CD4-positive, alpha-beta memory T cell (primary cell): ENCODE measurements at regions of chr2 and their contacts with region 1.

Region 1: GRCh38 chr2:9813312-9814133 is 29.8 kb upstream of the TAF1B start:
- DNase-seq: peak; percentile 43 to 64 (median 58)
- H3K4me3 ChIP-seq: no peak overlapping the region
- H3K4me3 Mint-ChIP-seq: no peak overlapping the region
- H3K27ac ChIP-seq: no peak overlapping the region
- H3K27ac Mint-ChIP-seq: peak overlapping the region in 1 of 7 donors; percentile 77
- H3K4me1 ChIP-seq: peaks cover 6% of the 10 kb centered on the region
- H3K4me1 Mint-ChIP-seq: peaks cover 9 to 16% (median 12%) of the 10 kb centered on the region in 4 donors
- H3K27me3 ChIP-seq: no peaks in the 10 kb centered on the region
- H3K27me3 Mint-ChIP-seq: peaks cover 2 to 5% of the 10 kb centered on the region in 2 donors

Region 2: GRCh38 chr2:8389373-8390108 is 1424.0 kb before region 1 on chr2:
- CTCF ChIA-PET with region 1: no interaction called
- POLR2A ChIA-PET with region 1: no interaction called
- intact Hi-C with region 1: no loop called
- DNase-seq: no peak
- H3K4me3 ChIP-seq: no peak overlapping the region
- H3K4me3 Mint-ChIP-seq: no peak overlapping the region
- H3K27ac ChIP-seq: no peak overlapping the region
- H3K27ac Mint-ChIP-seq: no peak overlapping the region
- H3K4me1 ChIP-seq: no peaks in the 10 kb centered on the region
- H3K4me1 Mint-ChIP-seq: peaks cover 3 to 13% (median 8%) of the 10 kb centered on the region in 4 donors
- H3K27me3 ChIP-seq: no peaks in the 10 kb centered on the region
- H3K27me3 Mint-ChIP-seq: no peaks in the 10 kb centered on the region

Region 3: DNA sequence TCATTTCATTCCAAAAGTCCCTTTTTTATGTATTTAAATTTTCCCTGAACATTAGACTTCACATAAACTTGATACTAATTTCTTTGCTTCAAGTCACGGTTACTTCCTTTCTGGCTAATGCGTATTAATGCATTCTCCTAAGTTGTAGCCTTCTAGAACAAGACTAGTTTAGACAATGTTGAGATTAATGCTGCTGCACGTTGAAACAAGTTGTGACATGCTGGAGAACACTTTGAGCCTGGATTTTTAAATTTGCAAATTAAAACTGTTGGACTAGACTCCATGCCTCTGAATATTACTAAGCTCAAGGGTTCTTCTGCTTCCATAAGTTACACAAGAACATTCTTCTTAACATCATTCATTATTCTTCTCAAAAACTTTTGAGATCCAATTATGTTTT is 1102.6 kb before region 1 on chr2:
- CTCF ChIA-PET with region 1: no interaction called
- POLR2A ChIA-PET with region 1: no interaction called
- intact Hi-C with region 1: no loop called
- DNase-seq: no peak
- H3K4me3 ChIP-seq: no peak overlapping the region
- H3K4me3 Mint-ChIP-seq: no peak overlapping the region
- H3K27ac ChIP-seq: no peak overlapping the region
- H3K27ac Mint-ChIP-seq: no peak overlapping the region
- H3K4me1 ChIP-seq: no peaks in the 10 kb centered on the region
- H3K4me1 Mint-ChIP-seq: no peaks in the 10 kb centered on the region
- H3K27me3 ChIP-seq: no peaks in the 10 kb centered on the region
- H3K27me3 Mint-ChIP-seq: peaks cover 8 to 9% of the 10 kb centered on the region in 2 donors

Region 4: DNA sequence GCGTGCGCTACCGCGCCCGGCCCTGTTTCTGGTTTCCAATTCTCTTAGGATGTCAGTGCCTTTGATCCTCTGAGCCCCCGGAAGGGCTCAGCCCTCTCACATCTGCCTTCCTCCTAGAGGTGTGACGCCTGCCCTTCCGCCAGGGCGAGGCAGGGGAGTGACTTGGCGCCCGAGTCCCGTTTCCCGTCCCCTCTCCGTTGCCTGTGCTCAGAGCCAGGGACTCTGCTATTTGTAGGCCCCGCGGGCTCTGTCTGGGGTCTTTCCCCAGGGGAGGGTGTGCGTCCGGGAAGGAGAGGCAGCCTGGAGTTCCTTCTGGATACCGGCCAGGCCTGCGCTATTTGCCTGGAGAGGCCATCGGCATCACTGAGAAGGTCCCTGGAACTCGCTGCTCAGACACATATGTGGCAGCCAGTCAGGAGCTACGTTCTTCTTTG is 74.0 kb before region 1 on chr2:
- CTCF ChIA-PET with region 1: no interaction called
- POLR2A ChIA-PET with region 1: no interaction called
- intact Hi-C with region 1: no loop called
- DNase-seq: peak; percentile 48 to 70 (median 54)
- H3K4me3 ChIP-seq: peak overlapping the region in 1 of 2 donors; percentile 27
- H3K4me3 Mint-ChIP-seq: peak overlapping the region; percentile 73 to 97 (median 87)
- H3K27ac ChIP-seq: peak overlapping the region; percentile 62
- H3K27ac Mint-ChIP-seq: peak overlapping the region; percentile 87 to 99 (median 96)
- H3K4me1 ChIP-seq: peaks cover 49% of the 10 kb centered on the region
- H3K4me1 Mint-ChIP-seq: peaks cover 34 to 70% (median 48%) of the 10 kb centered on the region in 4 donors
- H3K27me3 ChIP-seq: no peaks in the 10 kb centered on the region
- H3K27me3 Mint-ChIP-seq: no peaks in the 10 kb centered on the region

Region 5: GRCh38 chr2:9826208-9826607 is 12.7 kb after region 1 on chr2:
- CTCF ChIA-PET with region 1: interaction called, 15 read pairs
- POLR2A ChIA-PET with region 1: no interaction called
- intact Hi-C with region 1: no loop called
- DNase-seq: no peak
- H3K4me3 ChIP-seq: no peak overlapping the region
- H3K4me3 Mint-ChIP-seq: no peak overlapping the region
- H3K27ac ChIP-seq: no peak overlapping the region
- H3K27ac Mint-ChIP-seq: no peak overlapping the region
- H3K4me1 ChIP-seq: peaks cover 6% of the 10 kb centered on the region
- H3K4me1 Mint-ChIP-seq: peaks cover 0 to 8% (median 5%) of the 10 kb centered on the region in 4 donors
- H3K27me3 ChIP-seq: no peaks in the 10 kb centered on the region
- H3K27me3 Mint-ChIP-seq: peaks cover 0 to 2% of the 10 kb centered on the region in 2 donors

Region 6: DNA sequence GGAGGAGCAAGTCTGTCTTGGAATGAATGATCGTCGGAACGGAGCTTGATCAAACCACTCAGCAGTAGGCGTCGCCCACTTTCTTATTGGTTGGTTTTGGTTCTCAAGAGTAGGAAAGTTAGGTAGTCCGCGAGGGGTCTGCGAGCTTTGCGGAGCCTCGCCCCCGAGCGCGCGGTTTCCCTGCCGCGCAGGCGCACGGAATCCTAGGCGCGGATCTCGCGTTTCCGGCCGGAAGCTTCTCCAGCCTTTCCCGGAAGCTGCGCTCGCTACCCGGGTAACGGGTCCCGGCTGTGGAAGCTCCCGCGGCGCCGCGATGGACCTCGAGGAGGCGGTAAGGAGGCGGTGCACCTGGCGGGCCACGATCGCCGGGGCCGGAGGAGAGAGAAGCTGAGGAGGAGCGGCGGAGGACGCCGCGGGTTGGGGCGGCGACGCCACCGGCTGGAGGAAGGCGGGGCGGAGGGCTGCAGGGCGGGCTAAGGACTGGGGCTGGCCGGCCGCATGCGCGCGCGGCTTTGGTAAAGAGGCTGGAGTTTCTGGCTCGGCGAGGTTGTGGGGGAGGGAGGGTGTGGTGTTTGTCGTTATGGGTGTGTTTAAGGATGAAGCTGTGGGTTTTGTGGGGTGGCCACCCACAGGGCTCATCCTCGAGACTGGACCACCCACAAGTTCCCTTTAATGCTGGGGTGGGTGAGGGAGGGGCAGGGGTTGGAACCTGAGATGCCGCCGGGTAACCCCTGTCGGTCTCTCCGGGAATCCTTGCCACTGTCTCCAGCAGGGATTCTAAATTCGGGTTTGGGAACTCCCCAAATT is 29.9 kb after region 1 on chr2 and contains the start of gene TAF1B:
- CTCF ChIA-PET with region 1: interaction called, 16 read pairs
- POLR2A ChIA-PET with region 1: interaction called, 11 read pairs
- intact Hi-C with region 1: loop called (anchors 1 kb)
- DNase-seq: peak; percentile 82 to 84 (median 83)
- H3K4me3 ChIP-seq: peak within 1 kb of the TSS; percentile 85 to 92
- H3K4me3 Mint-ChIP-seq: peak within 1 kb of the TSS; percentile 91 to 97 (median 94)
- H3K27ac ChIP-seq: peak within 1 kb of the TSS; percentile 76
- H3K27ac Mint-ChIP-seq: peak within 1 kb of the TSS; percentile 82 to 97 (median 93)
- H3K4me1 ChIP-seq: peaks cover 41% of the 10 kb centered on the region
- H3K4me1 Mint-ChIP-seq: peaks cover 32 to 50% (median 40%) of the 10 kb centered on the region in 4 donors
- H3K27me3 ChIP-seq: no peaks in the 10 kb centered on the region
- H3K27me3 Mint-ChIP-seq: no peaks in the 10 kb centered on the region
- total RNA-seq, gene TAF1B: 23.5 to 23.9 TPM

Region 7: DNA sequence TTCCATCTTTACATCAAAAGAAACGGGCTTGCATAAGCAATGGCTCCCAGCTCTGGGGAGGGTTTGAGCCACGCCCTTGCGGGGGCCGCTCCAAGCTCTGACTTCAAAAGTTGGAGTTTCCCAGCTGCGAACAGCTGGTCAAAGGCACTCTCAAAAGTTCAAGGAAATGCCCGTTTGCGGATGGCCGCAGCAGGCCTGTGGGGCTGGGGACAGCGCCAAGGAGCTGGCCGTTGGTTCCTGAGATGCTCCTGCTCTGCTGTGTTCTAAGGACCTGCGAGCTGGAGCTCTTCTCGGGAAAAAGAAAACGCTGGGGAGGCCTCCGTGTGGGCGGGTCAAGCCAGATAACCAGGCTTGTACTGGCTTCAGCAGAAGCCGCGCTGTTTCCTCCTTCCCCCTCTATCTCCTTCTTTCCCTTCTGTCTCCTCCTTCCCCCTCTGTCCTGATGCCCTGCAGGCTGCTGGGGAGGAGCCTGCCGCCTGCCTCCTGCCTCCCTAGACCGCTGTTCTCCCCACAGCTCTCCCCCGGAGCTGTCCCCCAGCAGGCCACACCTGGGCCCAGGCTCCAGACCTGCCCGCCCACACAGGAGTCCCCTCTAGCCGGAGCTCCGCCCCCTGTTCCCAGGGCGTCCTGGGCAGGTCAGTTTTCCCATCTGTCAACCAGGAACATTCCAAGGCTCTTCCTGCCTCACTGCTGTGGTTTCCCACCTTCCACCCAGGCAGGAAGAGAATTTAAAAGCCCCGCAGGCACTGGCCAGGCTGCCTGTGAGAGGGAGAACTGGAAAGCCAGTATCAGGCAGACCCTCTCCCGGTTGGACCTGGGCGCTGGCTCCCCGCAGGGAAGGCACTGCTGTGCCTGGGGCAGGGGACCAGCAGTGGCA is 243.9 kb after region 1 on chr2:
- CTCF ChIA-PET with region 1: interaction called, 26 read pairs
- POLR2A ChIA-PET with region 1: no interaction called
- intact Hi-C with region 1: no loop called
- DNase-seq: no peak
- H3K4me3 ChIP-seq: no peak overlapping the region
- H3K4me3 Mint-ChIP-seq: peak overlapping the region in 2 of 8 donors; percentile 39 to 43
- H3K27ac ChIP-seq: no peak overlapping the region
- H3K27ac Mint-ChIP-seq: no peak overlapping the region
- H3K4me1 ChIP-seq: peaks cover 6% of the 10 kb centered on the region
- H3K4me1 Mint-ChIP-seq: peaks cover 0 to 4% (median 0%) of the 10 kb centered on the region in 4 donors
- H3K27me3 ChIP-seq: no peaks in the 10 kb centered on the region
- H3K27me3 Mint-ChIP-seq: peaks cover 0 to 2% of the 10 kb centered on the region in 2 donors